ENCODE measurements at regions of chr11 and their contacts with region 1.

Region 1: GRCh38 chr11:122853971-122854446 is 15.7 kb downstream of the CRTAM start:
- DNase-seq: peak in 1 of 2 donors; percentile 24
- ATAC-seq: peak in 1 of 2 donors; percentile 44
- H3K4me3 ChIP-seq: no peak overlapping the region
- H3K27ac ChIP-seq: no peak overlapping the region
- H3K4me1 ChIP-seq: no peaks in the 10 kb centered on the region
- H3K27me3 ChIP-seq: no peaks in the 10 kb centered on the region
- CTCF ChIP-seq: peak; percentile 33 to 73 (median 40)
- POLR2A ChIP-seq: no peak

Region 2: GRCh38 chr11:122578168-122578825 is 275.7 kb before region 1 on chr11:
- in situ Hi-C with region 1: loop called in 1 of 4 experiments (anchors 10 kb)
- intact Hi-C with region 1: loop called (anchors 2 kb)
- DNase-seq: no peak
- ATAC-seq: no peak
- H3K4me3 ChIP-seq: no peak overlapping the region
- H3K27ac ChIP-seq: no peak overlapping the region
- H3K4me1 ChIP-seq: peaks cover 0 to 3% of the 10 kb centered on the region in 2 donors
- H3K27me3 ChIP-seq: no peaks in the 10 kb centered on the region
- CTCF ChIP-seq: no peak
- POLR2A ChIP-seq: no peak

Region 3: DNA sequence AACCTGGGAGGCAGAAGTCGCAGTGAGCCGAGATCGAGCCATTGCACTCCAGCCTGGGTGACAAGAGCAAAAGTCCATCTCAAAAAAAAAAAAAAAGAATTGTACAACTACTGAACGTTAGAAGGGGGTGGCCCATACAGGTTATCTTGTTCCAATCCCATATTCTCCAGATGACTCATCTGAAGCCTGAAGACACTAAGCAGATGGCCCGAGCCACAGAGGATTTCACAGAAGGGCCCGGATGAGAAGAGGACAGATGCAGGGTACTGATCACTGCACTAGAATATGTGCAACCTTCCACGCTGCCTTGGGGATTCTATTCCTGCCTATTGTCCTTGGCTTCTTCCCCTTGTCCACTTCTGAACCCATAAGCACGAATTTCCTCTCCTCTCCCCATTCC is 269.3 kb before region 1 on chr11:
- in situ Hi-C with region 1: loop called in 1 of 4 experiments (anchors 10 kb)
- intact Hi-C with region 1: loop called (anchors 2 kb)
- DNase-seq: no peak
- ATAC-seq: no peak
- H3K4me3 ChIP-seq: no peak overlapping the region
- H3K27ac ChIP-seq: no peak overlapping the region
- H3K4me1 ChIP-seq: peaks cover 0 to 3% of the 10 kb centered on the region in 2 donors
- H3K27me3 ChIP-seq: no peaks in the 10 kb centered on the region
- CTCF ChIP-seq: no peak
- POLR2A ChIP-seq: no peak

Region 4: DNA sequence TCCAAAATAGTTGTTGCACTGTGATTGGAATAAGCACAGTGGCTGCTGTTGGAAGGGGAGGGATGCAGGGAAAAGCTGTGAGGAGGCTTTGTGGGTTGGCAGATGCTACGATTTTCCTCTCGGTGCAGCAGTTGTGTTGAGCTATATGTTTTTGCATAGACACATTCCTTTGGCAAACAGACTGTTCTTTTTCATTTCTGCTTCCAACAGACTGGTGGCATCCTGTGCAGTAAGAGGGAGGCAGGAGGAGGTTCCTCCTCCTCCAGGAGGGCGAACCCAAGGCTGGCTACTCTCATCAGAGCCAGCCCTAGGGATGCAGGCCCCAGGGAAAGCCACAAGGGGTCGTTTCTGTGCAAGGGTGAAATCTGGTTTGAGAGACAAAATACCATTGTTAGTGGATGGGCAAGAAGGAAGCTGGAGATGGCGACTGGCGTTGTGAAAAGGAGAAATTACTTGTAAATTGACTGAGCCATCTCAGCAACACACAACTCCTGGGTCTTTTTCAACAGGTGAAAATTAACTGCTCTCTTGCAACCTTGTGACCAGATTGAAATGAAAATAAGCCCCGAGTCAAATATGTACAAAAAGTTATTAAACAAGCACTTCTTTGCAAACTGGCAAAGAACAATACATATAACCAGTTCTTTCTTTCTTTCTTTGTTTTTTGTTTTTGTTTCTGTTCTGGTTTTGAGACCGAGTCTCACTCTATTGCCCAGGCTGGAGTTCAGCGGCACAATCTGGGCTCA is 225.0 kb before region 1 on chr11:
- in situ Hi-C with region 1: loop called in 1 of 4 experiments (anchors 10 kb)
- intact Hi-C with region 1: loop called (anchors 2 kb)
- DNase-seq: peak; percentile 5 to 24
- ATAC-seq: peak; percentile 54 to 60
- H3K4me3 ChIP-seq: no peak overlapping the region
- H3K27ac ChIP-seq: no peak overlapping the region
- H3K4me1 ChIP-seq: no peaks in the 10 kb centered on the region
- H3K27me3 ChIP-seq: no peaks in the 10 kb centered on the region
- CTCF ChIP-seq: peak in 4 of 5 experiments; percentile 24 to 58 (median 44)
- POLR2A ChIP-seq: no peak

Region 5: GRCh38 chr11:122796128-122796717 is 57.8 kb before region 1 on chr11:
- in situ Hi-C with region 1: loop called in 2 of 4 experiments (anchors 5 to 10 kb)
- intact Hi-C with region 1: loop called (anchors 10 kb)
- DNase-seq: no peak
- ATAC-seq: no peak
- H3K4me3 ChIP-seq: no peak overlapping the region
- H3K27ac ChIP-seq: no peak overlapping the region
- H3K4me1 ChIP-seq: peaks cover 0 to 3% of the 10 kb centered on the region in 2 donors
- H3K27me3 ChIP-seq: no peaks in the 10 kb centered on the region
- CTCF ChIP-seq: peak; percentile 32 to 69 (median 59)
- POLR2A ChIP-seq: no peak

Region 6: GRCh38 chr11:122814401-122814800 is 39.6 kb before region 1 on chr11:
- in situ Hi-C with region 1: no loop called
- intact Hi-C with region 1: no loop called
- DNase-seq: no peak
- ATAC-seq: no peak
- H3K4me3 ChIP-seq: no peak overlapping the region
- H3K27ac ChIP-seq: no peak overlapping the region
- H3K4me1 ChIP-seq: peaks cover 0 to 11% of the 10 kb centered on the region in 2 donors
- H3K27me3 ChIP-seq: no peaks in the 10 kb centered on the region
- CTCF ChIP-seq: no peak
- POLR2A ChIP-seq: no peak

Region 7: DNA sequence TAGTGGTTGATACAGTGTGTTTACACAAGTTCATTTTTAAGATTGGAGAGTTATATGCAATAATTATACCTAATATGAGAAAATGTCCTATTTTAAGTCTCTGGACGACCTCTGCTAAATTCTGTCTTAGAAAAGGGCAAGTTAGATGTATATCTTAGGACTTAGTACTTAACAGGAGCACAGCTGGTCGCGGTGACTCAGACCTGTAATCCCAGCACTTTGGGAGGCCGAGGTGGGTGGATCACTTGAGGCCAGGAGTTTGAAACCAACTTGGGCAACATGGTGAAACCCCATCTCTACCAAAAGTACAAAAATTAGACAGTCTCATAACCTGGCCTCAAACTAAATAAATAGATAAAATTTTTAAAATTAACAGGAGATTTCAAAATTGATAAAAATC is 100.4 kb after region 1 on chr11:
- in situ Hi-C with region 1: no loop called
- intact Hi-C with region 1: no loop called
- DNase-seq: no peak
- ATAC-seq: no peak
- H3K4me3 ChIP-seq: no peak overlapping the region
- H3K27ac ChIP-seq: no peak overlapping the region
- H3K4me1 ChIP-seq: no peaks in the 10 kb centered on the region
- H3K27me3 ChIP-seq: no peaks in the 10 kb centered on the region
- CTCF ChIP-seq: no peak
- POLR2A ChIP-seq: no peak

Measured in gastrocnemius medialis (tissue), 4 donors.